H1 (cell line): ENCODE measurements at regions of chr17 and their contacts with region 1.

Region 1: GRCh38 chr17:72764632-72765041 is 327.9 kb downstream of the SLC39A11 start:
- DNase-seq: no peak
- H3K4me3 ChIP-seq: no peak overlapping the region
- H3K27ac ChIP-seq: no peak overlapping the region
- H3K4me1 ChIP-seq: no peaks in the 10 kb centered on the region
- H3K27me3 ChIP-seq: peaks cover 0 to 6% (median 4%) of the 10 kb centered on the region in 4 experiments; a peak in 5 of 7 replicates
- CTCF ChIP-seq: no peak
- EP300 ChIP-seq: no peak
- POLR2A ChIP-seq: no peak
- RAD21 ChIP-seq: no peak

Region 2: DNA sequence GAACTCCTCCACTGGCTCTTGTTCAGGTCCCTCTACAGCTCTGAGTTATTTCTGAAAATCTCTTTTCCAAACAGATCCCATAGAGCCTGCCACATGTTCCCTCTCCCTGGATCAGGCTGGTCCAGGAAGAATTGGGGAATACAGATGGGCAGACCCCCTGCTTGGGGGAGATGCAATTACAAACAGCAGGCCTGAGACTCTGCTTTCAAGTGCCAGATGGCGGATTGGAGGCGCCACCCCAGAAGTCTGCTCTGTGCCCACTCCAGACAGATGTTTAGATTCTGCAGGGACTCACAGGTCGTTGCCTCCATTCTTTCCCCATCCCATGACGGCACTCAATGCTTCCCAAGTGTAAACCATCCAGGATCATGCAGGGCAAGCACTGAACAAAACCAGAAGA is 11.3 kb after region 1 on chr17:
- CTCF ChIA-PET with region 1: interaction called, 11 read pairs
- POLR2A ChIA-PET with region 1: no interaction called
- DNase-seq: no peak
- H3K4me3 ChIP-seq: no peak overlapping the region
- H3K27ac ChIP-seq: no peak overlapping the region
- H3K4me1 ChIP-seq: peaks cover 0 to 7% (median 0%) of the 10 kb centered on the region in 4 experiments; a peak in 3 of 7 replicates
- H3K27me3 ChIP-seq: no peaks in the 10 kb centered on the region
- CTCF ChIP-seq: no peak
- EP300 ChIP-seq: no peak
- POLR2A ChIP-seq: no peak
- RAD21 ChIP-seq: no peak